ENCODE measurements at regions of chr13 and their contacts with region 1.

Region 1: DNA sequence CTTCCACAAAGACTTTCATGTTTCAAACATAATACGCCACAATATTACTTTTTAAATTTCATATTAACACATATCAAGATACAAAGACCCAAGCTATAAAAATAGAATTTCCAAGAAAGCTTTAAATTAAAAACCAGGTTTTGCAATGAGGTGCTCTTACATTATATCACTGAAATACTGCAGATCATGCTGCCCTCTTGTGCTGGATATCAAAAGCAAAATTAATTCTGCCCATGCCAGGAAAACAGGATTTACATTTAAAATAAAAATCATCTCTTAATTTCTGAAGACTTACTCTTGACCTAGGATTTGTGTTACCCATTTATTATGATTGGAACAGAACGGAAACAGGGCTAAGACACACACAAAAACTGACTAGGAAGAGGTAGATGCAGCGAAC is 145.0 kb downstream of the ABCC4 start:
- DNase-seq: no peak
- H3K4me3 Mint-ChIP-seq: no peak overlapping the region
- H3K27ac Mint-ChIP-seq: no peak overlapping the region
- H3K4me1 Mint-ChIP-seq: peaks cover 30% of the 10 kb centered on the region
- H3K27me3 Mint-ChIP-seq: no peaks in the 10 kb centered on the region

Region 2: GRCh38 chr13:94660695-94661326 is 495.4 kb before region 1 on chr13:
- intact Hi-C with region 1: loop called (anchors 10 kb)
- DNase-seq: no peak
- H3K4me3 Mint-ChIP-seq: no peak overlapping the region
- H3K27ac Mint-ChIP-seq: no peak overlapping the region
- H3K4me1 Mint-ChIP-seq: peaks cover 37% of the 10 kb centered on the region
- H3K27me3 Mint-ChIP-seq: peaks cover 13% of the 10 kb centered on the region

Region 3: GRCh38 chr13:94974015-94974951 is 181.9 kb before region 1 on chr13:
- intact Hi-C with region 1: loop called (anchors 10 kb)
- DNase-seq: no peak
- H3K4me3 Mint-ChIP-seq: no peak overlapping the region
- H3K27ac Mint-ChIP-seq: no peak overlapping the region
- H3K4me1 Mint-ChIP-seq: no peaks in the 10 kb centered on the region
- H3K27me3 Mint-ChIP-seq: peaks cover 22% of the 10 kb centered on the region

Measured in activated T-helper 2 cell treated with anti-CD3 and anti-CD28 coated beads, Interferon-gamma antibody, Interleukin-2, Interleukin-4, amounts not matched to agents 10 μg/mL and 5 μg/mL and 100 μg/mL, durations not matched to agents 14 hours and 24 hours and 36 hours (primary cell).